ENCODE measurements at regions of chr7 and their contacts with region 1.

Region 1: GRCh38 chr7:155380221-155380861 is 77.6 kb upstream of the EN2 start:
- DNase-seq: peak; percentile 82
- H3K4me3 Mint-ChIP-seq: no peak overlapping the region
- H3K27ac Mint-ChIP-seq: no peak overlapping the region
- H3K4me1 Mint-ChIP-seq: peaks cover 22% of the 10 kb centered on the region
- H3K27me3 Mint-ChIP-seq: peaks cover 88% of the 10 kb centered on the region

Region 2: DNA sequence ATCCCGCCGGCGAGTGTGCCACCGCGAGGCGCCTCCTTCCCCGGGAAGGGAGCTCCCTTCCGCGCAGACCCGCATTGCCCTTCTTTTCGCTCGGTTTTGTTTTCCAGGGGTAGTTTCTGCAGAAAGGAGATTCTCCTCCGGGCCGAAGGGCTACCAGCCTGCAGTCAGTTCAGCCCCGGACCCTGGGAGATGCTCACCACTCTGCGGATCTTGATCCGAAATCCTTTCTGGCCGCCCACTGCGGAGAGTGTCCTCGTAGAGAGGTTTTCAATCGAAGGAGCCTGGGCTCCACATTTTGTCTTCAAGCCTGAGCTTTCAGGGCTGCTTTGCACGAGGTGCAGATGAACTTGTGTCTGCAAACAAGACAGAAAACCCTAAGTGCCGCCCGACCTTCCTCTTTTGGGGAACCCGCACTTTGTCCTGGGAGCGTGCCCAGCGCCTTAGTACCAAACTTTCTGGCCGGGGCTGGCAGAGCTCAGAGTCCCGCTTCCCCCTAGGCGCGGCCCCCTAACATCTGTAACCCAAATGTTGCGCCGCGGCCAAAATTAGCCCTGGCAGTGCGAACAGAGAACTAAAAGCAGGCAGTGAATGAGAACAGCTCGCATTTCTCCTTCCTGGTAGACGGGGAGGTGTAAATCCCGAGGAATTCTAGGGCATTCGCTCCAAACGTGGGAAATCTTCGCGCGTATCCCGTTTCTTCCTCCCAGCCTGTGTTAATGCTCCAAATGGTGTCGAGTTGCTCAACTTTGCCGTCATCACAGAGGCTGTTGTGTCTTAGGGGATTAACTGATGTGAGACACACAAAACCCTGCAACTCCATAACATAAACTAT is 70.8 kb after region 1 on chr7:
- CTCF ChIA-PET with region 1: interaction called, 6 read pairs
- POLR2A ChIA-PET with region 1: no interaction called
- intact Hi-C with region 1: loop called (anchors 2 kb)
- DNase-seq: no peak
- H3K4me3 Mint-ChIP-seq: no peak overlapping the region
- H3K27ac Mint-ChIP-seq: no peak overlapping the region
- H3K4me1 Mint-ChIP-seq: peaks cover 14% of the 10 kb centered on the region
- H3K27me3 Mint-ChIP-seq: peaks cover 69% of the 10 kb centered on the region

Region 3: GRCh38 chr7:155533827-155534690 is 153.7 kb after region 1 on chr7:
- CTCF ChIA-PET with region 1: interaction called, 17 read pairs
- POLR2A ChIA-PET with region 1: no interaction called
- intact Hi-C with region 1: loop called (anchors 1 kb)
- DNase-seq: peak; percentile 50
- H3K4me3 Mint-ChIP-seq: peak overlapping the region; percentile 47
- H3K27ac Mint-ChIP-seq: no peak overlapping the region
- H3K4me1 Mint-ChIP-seq: peaks cover 13% of the 10 kb centered on the region
- H3K27me3 Mint-ChIP-seq: peaks cover 65% of the 10 kb centered on the region

Region 4: GRCh38 chr7:155804897-155805825 is 424.8 kb after region 1 on chr7:
- CTCF ChIA-PET with region 1: no interaction called
- POLR2A ChIA-PET with region 1: no interaction called
- intact Hi-C with region 1: loop called (anchors 5 kb)
- DNase-seq: peak; percentile 63
- H3K4me3 Mint-ChIP-seq: peak overlapping the region; percentile 32
- H3K27ac Mint-ChIP-seq: no peak overlapping the region
- H3K4me1 Mint-ChIP-seq: peaks cover 23% of the 10 kb centered on the region
- H3K27me3 Mint-ChIP-seq: peaks cover 55% of the 10 kb centered on the region

Measured in activated CD4-positive, alpha-beta memory T cell treated with anti-CD3 and anti-CD28 coated beads for 36 hours (primary cell).